Dendritic cell treated with granulocyte-macrophage colony-stimulating factor and Interleukin-4, amounts not matched to agents 40 ng/mL and 50 ng/mL, for 4 days (primary cell): ENCODE measurements at regions of chrX and their contacts with region 1.

Region 1: DNA sequence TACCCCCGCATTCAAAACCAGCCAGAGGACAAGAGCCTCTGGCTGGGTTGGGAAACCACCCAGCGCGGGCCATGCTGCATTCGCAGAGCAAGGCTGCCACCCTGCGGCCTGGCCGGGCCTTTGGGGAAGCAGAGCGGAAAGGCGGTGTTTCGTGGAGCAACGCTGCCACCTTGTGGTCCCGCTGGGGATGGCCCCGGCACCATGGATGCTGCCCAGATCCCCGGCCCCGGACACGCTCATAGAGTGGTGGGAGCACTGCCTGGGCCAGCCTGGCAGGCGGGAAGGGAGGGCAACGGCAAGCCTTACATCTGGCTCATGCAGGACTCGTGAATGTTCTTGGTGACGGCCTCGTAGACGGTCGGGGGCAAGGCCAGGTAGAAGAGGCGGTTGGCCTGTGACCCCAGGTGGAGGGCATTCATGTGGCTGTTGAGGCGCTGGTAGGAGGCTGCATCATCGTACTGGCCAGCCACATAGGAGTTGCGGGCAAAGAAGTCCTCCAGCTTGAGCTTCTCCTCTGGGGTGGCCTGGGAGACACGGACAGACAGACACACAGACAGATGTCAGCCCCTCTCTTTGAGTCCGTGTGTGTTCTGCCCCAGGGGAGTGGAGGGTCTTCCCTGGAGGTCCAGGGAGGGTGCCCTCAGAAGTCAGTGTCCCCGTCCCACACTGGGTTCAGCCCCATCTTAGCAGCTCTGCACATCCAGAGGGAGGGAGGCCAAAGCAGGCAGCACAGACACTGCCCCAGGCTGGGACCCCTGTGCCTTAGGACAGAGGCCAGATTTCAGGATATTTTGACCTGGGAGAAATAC is 11.6 kb downstream of the G6PD start:
- H3K4me3 Mint-ChIP-seq: no peak overlapping the region
- H3K27ac Mint-ChIP-seq: peak overlapping the region; percentile 45
- H3K4me1 Mint-ChIP-seq: peaks cover 24% of the 10 kb centered on the region
- H3K27me3 Mint-ChIP-seq: no peaks in the 10 kb centered on the region

Region 2: DNA sequence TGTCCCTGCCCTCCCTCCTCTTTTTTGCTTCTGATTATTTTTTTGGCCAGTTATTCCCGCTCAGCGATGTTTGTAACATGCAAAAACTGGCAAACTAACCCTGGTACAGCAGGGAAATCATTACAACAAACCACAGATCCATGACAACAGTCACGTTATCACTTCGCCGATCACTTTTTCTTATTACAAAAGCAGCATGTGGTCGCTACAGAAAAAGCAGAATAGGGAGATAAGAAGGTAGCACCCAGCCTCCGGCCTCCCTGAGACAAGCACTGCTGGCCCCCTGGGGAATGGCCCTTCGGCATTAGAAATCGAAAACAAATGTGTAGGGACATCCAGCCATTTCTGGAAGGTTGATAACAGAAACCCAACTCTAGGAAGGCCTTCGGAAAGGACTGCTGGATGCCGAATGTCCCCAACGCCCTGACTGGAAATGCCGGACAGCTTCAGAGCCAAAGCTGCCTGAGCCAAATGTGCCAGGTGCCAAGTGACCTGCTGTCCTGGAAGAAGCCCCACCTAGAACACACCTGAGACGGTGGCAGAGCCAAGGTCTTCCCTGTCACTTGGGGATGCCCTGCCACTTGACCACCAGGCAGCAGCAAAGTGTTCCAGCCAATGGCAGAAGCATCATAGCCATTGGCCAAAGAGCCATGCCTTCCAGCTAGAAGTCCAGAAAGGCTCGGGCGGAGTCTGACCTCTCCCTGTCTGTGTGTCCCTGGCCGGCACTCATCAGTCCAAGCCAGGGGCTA is 743.8 kb before region 1 on chrX:
- intact Hi-C with region 1: no loop called
- H3K4me3 Mint-ChIP-seq: no peak overlapping the region
- H3K27ac Mint-ChIP-seq: no peak overlapping the region
- H3K4me1 Mint-ChIP-seq: peaks cover 24% of the 10 kb centered on the region
- H3K27me3 Mint-ChIP-seq: no peaks in the 10 kb centered on the region

Region 3: DNA sequence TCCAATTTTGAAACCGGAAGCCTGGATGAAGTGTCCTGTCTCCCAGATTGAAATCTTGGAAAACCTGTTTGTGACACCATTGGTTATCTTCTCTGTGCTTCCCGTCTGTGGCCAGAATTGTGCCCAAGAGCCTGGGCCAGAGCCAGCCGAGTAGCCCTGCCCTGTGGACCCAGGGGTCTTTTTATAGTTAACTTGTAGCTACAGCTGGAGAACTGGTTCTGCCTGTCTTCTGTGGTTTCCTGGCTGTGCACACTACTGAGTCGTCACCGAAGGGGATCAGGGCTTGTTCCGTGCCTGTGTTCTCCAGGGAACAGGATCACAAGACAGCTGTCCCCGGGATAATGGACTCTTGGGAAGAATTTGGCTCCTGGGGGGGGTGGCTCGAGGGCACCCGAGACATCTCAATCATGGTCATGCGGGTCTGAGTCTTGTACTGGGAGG is 413.2 kb before region 1 on chrX:
- intact Hi-C with region 1: no loop called
- H3K4me3 Mint-ChIP-seq: no peak overlapping the region
- H3K27ac Mint-ChIP-seq: no peak overlapping the region
- H3K4me1 Mint-ChIP-seq: peaks cover 5% of the 10 kb centered on the region
- H3K27me3 Mint-ChIP-seq: peaks cover 7% of the 10 kb centered on the region

Region 4: DNA sequence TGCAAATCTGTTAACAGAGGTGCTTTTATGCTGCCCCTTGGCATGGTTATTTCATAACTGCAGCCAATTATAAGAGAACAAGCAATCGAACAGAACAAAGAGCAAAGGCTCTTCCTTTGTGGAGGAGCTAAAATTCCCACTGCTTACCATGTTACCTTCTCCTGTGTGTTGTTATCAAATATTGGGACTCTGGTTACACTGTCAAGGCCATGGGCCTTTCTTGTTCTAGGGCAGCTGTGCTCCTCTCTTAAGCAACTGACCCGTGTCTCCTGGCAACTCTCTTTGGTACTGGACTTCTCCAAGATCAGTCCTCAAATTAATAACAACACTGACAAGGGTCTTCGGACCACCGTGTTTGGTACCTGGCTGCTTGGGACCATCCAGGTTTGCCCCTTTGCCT is 403.1 kb before region 1 on chrX:
- intact Hi-C with region 1: loop called (anchors 5 kb)
- H3K4me3 Mint-ChIP-seq: no peak overlapping the region
- H3K27ac Mint-ChIP-seq: no peak overlapping the region
- H3K4me1 Mint-ChIP-seq: peaks cover 5% of the 10 kb centered on the region
- H3K27me3 Mint-ChIP-seq: peaks cover 6% of the 10 kb centered on the region

Region 5: DNA sequence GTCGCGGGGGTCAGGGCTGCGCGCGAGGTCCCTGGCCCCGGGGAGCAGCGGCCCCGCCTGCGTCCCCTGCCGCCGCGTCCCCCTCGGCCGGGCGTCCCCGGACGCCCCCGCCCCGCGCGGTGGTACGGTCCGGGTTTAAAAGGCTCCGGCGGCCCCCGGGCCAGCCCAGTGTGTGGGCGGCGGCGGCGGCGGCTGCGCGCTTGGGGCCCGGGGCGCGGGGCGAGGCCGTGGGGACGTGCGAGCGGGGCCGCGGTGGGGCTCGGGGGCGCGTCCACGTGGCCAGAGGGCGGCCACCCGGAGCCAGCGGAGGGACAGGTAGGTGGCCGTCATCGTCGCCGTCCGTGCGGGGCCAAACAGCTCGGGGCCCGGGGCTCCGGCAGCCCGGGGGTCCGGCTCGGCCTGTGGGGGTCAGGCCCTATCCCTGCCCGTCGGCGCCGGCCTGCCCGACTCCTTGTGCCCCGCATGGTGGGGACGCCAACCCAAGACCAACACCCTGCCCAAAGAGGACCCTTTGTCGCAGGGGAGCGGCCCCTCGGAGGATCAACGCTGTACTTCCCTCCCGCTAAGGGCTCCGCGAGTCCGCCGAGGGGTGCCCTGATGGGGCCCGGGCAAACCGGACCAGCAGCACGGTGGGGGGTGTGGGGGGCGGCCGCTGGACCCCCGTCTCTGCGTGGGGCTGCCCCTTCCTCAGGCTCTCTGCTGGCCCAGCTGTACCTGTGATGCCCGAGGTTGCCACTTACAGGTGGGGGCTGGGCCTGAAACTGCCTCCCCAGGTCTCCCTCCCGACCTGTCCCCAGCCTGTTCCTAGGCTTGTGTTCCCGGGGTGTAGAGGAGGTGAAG is 76.7 kb before region 1 on chrX and contains the start of gene PLXNA3:
- intact Hi-C with region 1: no loop called
- H3K4me3 Mint-ChIP-seq: peak within 1 kb of the TSS; percentile 93
- H3K27ac Mint-ChIP-seq: peak within 1 kb of the TSS; percentile 92
- H3K4me1 Mint-ChIP-seq: peaks cover 30% of the 10 kb centered on the region
- H3K27me3 Mint-ChIP-seq: peaks cover 10% of the 10 kb centered on the region